ENCODE measurements at regions of chr6 and their contacts with region 1.

Region 1: DNA sequence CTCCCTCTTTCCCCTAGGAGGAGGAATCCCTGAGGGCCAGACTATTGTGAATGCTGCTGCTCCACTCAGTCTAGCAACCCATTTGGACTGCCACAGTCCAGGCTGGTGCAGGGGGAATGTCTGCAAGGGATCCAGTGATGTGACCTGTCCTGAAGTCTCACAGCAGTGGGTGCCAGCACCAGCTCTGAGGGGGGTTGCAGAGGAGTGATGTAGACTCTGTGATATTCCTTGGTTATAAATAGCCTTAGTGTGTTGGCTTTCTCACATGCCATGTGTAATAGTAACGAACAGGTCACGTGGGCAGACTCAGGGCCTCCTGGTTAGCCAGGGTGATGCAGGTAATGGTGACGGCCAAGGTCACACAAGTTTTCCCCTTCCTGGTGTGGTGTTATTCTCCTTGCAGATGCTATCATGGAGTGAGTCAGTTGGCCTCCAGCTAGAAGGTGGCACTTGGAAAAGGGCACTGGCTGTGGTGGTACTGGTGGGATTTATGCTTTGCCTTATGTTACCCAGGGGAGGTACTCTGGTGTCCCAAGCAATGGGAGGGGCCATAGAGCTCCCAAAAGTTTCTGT is 404.5 kb downstream of the UTRN start:
- DNase-seq: no peak
- H3K4me3 ChIP-seq: no peak overlapping the region
- CTCF ChIP-seq: no peak
- POLR2A ChIP-seq: no peak

Region 2: DNA sequence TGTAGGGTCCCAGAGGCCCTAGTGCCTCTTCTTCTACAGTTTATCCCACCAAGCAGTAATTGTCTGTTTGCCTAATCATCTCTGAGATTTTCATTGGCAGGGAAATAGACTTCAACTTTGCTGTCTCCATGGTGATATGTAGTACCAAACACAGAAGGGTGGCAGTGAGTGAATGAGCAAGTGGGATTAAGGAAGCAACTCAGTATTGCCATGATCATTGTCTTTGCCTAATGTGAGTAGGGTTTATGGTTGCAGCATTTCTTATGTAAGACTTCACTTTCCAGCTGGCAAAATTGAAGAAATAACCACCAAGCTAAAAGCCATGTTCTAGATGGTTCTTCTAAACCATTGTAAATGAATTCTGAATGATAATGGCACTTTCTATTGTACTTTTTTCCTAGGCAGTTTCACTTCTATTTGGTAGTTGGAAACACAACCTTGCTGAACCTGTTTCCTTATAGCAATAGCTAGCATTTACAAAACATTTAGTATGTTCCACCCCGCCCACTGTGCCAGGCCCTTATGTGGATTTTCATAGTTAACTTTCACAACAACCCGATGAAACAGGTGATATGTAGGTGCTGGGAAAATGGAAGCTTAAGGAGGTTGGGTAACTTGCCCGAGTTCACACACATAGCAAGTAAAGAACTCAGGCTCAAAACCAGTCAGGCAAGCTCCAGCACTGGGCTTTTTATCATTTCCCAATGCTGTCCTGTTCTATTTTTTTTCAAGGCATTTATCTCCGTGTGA is 793.3 kb before region 1 on chr6:
- intact Hi-C with region 1: no loop called
- DNase-seq: peak in 1 of 2 donors; percentile 42
- H3K4me3 ChIP-seq: no peak overlapping the region
- CTCF ChIP-seq: no peak
- POLR2A ChIP-seq: no peak

Region 3: GRCh38 chr6:143912671-143913070 is 776.9 kb before region 1 on chr6:
- intact Hi-C with region 1: loop called (anchors 5 kb)
- DNase-seq: no peak
- H3K4me3 ChIP-seq: no peak overlapping the region
- CTCF ChIP-seq: no peak
- POLR2A ChIP-seq: no peak